ENCODE measurements at regions of chr17 and their contacts with region 1.

Region 1: DNA sequence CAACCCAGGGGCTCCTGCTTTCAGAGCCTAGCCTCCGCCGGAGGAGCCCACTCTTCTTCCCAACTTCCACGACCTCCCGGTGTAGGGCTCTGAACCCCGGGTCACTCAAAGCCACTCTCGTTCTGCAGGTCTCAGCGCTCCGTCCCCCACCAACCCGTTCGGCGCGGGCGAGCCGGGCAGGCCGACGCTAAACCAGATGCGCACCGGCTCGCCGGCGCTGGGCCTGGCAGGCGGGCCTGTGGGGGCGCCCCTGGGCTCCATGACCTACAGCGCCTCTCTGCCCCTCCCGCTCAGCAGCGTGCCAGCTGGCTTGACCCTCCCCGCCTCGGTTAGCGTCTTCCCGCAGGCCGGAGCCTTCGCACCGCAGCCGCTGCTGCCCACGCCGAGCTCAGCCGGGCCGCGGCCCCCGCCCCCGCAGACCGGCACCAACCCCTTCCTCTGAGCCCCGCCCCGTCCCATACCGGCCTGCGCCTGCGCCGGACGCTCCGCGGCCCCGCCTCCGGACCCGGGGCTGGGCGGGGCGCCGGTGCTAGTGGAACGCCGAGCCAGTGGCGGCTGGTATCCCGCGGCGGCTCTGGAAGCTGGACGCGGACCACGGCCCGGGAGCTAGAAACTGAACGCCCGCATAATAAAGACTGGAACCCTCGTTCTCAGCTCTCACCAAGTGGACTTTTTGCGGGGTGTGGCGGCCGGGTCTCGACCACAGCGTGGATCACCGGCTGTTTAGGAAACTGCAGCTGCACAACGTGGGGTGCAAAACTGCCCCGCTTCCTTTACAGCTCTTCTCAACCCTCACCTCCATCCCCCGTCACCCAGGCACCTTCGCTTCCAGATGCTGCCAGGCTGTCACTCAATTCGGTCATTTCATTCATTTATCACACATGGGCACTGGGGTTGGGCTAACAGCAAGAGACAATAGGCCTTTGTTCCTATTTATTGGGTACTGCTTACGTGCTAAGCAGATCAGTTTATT is 5.0 kb upstream of the SPATA20 start:
- DNase-seq: peak; percentile 55 to 94 (median 88)

Region 2: DNA sequence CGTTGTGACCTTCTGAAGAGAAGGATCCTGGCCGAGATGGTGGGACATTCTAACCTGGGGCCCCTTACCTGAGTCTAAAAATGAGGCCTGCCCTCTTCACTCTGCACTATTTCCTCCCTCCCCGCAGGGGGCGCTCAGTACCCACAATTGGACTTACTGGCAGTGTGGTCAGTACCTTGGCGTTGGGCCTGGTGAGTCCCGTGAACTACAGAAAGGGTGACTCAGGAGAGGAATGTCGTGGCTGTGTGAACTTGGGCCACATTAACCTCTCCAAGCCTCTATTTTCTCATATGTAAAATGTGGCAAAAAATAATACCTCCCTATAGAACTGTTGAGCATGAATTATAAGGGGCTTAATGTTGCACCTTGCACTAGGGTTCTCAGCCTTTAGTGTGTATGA is 59.5 kb before region 1 on chr17:
- intact Hi-C with region 1: loop called (anchors 5 kb)
- DNase-seq: peak; percentile 70 to 97 (median 90)

Region 3: DNA sequence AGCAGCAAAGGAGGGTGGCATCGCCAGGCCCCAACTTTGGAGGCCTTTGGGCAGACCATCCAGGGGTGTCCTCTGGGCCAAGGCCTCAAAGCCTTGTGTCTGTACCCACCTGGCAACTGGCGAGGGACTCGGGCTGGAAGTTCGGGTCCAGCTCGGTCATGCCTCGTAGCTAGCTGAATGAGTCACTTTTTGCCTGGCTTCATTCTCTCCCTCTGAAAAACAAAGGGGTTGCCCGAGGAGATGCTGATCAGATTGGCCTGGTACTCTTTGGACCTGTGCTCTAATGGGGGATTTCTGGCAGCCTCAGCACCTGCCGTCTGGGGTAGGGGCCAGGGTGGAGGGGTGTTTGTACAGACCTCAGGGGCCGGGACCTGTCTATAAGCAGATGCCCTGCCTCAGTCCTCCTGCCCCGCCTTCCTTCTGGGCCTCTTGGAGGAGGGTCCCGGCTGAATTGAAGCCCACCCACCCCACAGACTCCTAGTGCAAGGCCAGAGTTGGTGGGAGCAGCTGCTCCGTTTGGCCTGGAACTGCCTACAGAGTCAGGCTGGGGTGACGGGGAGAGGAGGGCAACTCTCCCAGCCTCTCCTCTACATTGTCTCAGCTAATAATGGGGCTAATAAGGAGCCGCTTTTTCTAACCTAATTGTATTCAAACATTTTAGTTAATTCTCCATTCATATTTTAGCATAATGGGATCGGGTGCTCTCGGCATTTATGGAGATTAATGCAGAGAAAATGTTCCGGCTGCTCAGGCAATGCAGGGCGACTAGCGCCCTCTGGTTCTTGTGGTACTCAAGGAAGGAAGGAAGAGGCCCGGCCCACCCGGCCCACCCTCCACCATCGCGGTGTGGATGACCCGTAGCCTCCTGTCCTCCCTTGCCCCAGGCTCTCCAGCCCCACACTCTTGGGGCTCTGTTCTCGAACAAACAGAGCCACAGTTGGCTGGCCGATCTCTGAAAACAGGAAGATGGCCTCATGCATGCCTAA is 71.3 kb after region 1 on chr17:
- intact Hi-C with region 1: no loop called
- DNase-seq: peak in 14 of 42 donors; percentile 24 to 60 (median 40)

Region 4: GRCh38 chr17:50626037-50626574 is 84.1 kb after region 1 on chr17:
- intact Hi-C with region 1: loop called (anchors 5 kb)
- DNase-seq: peak in 39 of 42 donors; percentile 28 to 81 (median 55)

Region 5: DNA sequence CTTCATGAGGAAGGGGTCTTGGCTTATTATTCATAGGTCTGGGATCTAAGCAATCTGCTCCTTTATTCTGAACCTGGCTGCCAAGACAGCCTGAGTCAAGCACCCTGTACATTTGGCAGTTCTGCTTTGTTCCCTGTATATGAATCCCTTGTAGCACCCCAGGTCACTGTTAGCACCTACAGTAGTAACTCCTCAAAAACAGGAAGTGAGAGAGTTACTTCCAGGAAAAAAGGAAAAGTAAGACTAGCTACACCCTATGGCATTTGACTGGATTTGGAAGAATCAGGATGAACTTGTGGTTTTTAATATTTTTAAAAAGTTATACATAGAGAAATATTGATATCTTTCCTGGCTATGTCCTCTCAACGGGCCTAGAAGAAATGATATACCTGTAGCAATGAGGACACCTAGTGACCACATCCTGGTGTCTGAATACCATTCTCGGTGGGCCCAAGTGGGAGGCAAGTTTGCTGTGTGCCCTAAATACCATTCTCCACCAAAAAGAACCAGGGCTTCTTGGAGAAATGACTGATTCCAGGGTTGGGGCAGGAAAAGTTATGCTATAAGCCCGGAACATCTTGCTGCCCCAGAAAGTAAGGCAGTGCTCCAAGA is 155.8 kb after region 1 on chr17:
- intact Hi-C with region 1: loop called (anchors 5 kb)
- DNase-seq: peak in 1 of 42 donors; percentile 16

Measured in head of caudate nucleus (tissue), 42 donors.